ENCODE measurements at regions of chr2 and their contacts with region 1.

Region 1: GRCh38 chr2:68196120-68196716 is 38.5 kb downstream of the PNO1 start:
- DNase-seq: peak in 1 of 10 donors; percentile 19

Region 2: GRCh38 chr2:68244456-68244855 is 48.2 kb after region 1 on chr2:
- intact Hi-C with region 1: loop called (anchors 2 kb)
- DNase-seq: no peak

Region 3: GRCh38 chr2:68282811-68283418 is 86.7 kb after region 1 on chr2:
- intact Hi-C with region 1: loop called (anchors 5 kb)
- DNase-seq: no peak